RWPE1 (cell line): ENCODE measurements at regions of chr10 and their contacts with region 1.

Region 1: DNA sequence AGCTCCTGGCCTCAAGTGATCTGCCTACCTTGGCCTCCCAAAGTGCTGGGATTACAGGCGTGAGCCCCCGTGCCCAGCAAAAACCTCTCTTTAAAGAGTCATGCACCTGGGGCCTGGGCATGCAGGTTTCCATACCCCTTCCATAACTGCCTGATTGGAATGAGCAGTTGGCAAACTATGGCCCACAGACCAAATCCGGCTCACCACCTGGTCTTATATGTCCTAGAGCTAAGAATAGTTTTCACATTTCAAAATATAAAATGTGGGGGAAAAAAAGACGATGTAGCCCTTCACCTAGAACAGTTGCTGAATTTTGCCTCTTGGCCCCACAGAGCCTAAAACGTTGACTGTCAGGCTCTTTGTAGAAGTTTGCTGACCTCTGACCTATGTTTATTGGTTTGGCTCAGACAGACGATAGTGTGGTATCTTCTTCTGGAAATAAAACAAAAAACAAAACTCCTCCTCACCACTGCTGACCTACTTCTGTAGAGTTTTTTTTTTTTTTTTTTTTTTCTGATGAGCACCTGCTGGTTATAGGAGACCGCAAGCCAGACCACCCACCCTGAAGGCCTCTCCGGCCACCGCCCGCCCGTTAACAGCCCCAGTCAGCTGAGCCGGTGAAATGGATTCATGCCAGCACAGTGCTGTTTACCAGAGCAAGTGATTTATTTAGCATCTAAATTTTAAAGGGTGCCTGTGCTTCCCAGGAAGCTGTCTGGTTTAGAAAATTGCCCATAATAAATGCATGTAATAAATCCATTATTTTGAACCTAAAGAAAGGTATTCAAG is 33.5 kb upstream of the SFRP5 start:
- DNase-seq: no peak
- H3K27ac ChIP-seq: no peak overlapping the region
- CTCF ChIP-seq: no peak

Region 2: DNA sequence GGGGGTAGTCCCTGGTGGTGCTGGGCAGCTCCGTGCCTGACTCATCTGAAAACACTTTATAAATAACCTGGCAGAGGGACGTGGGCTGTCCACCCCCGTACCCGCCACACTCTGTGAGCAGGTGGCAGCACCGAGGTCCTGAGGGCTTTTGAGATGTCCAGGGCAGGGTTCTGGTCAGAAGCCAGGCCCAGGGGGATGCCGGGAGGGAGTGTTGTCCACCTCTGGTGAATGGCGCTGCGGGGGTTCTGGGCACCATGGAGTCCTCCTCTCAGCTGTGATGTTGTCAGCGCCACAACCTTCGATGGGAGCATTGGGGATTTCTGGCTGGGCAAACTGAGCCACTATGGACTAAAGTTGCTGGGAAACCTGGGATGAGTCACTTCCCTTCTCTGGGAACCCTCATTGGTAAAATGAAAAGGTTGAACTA is 17.0 kb after region 1 on chr10:
- CTCF ChIA-PET with region 1: no interaction called
- POLR2A ChIA-PET with region 1: no interaction called
- DNase-seq: peak; percentile 70
- H3K27ac ChIP-seq: no peak overlapping the region
- CTCF ChIP-seq: no peak

Region 3: GRCh38 chr10:97843281-97843671 is 38.0 kb after region 1 on chr10:
- CTCF ChIA-PET with region 1: no interaction called
- POLR2A ChIA-PET with region 1: interaction called, 16 read pairs
- DNase-seq: no peak
- H3K27ac ChIP-seq: no peak overlapping the region
- CTCF ChIP-seq: no peak

Region 4: GRCh38 chr10:98134431-98135221 is 329.3 kb after region 1 on chr10 and contains the start of gene R3HCC1L:
- CTCF ChIA-PET with region 1: no interaction called
- POLR2A ChIA-PET with region 1: no interaction called
- DNase-seq: peak; percentile 91
- H3K27ac ChIP-seq: peak within 1 kb of the TSS; percentile 86
- CTCF ChIP-seq: no peak